Activated CD8-positive, alpha-beta T cell treated with anti-CD3 and anti-CD28 coated beads, Interleukin-2, amount 10 ng/mL, durations not matched to agents 7 days and 5 days (primary cell): ENCODE measurements at regions of chr1 and their contacts with region 1.

Region 1: DNA sequence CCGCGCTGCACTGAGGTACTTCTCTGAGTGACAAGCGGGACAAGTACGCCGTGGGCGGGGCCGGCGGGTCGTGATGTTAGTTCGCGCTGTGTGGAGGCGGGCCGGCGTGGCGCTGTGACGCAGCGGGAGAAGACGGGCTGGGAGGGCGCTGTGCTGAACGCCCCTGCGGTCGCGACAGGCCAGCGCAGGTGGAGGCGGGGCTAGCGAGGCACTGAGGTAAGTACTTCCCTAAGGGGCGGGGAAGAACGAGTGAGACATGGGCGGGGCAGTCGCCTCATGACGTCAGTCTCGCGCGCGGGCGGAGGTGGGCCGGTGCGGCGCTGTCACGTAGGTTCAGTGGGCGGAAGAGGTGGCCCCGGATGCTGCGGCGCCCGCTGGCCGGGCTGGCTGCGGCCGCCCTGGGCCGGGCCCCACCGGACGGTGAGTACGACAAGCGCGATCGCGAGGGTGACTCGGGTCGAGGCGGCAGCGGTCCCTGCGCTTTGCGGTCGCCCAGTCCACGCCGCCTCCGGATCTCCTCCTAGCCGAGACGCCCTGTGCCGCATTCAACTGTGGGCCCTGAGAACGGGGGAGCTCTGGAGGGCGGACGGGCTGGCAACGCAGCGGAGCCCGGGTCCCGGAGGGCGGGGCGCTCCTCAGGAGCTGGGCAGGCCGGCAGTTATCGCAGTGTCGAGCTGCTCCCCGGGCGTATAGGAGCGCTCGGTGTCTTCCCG is at the start of gene GUK1:
- DNase-seq: peak; percentile 100
- ATAC-seq: peak; percentile 91
- H3K4me3 Mint-ChIP-seq: peak within 1 kb of the TSS; percentile 100
- H3K27ac Mint-ChIP-seq: peak within 1 kb of the TSS; percentile 99
- H3K4me1 Mint-ChIP-seq: peaks cover 42% of the 10 kb centered on the region
- H3K27me3 Mint-ChIP-seq: peaks cover 8% of the 10 kb centered on the region
- total RNA-seq, gene GUK1: 339 to 344 TPM

Region 2: GRCh38 chr1:228097328-228098081 is 42.6 kb before region 1 on chr1:
- CTCF ChIA-PET with region 1: no interaction called
- POLR2A ChIA-PET with region 1: no interaction called
- DNase-seq: no peak
- ATAC-seq: no peak
- H3K4me3 Mint-ChIP-seq: no peak overlapping the region
- H3K27ac Mint-ChIP-seq: no peak overlapping the region
- H3K4me1 Mint-ChIP-seq: peaks cover 13% of the 10 kb centered on the region
- H3K27me3 Mint-ChIP-seq: no peaks in the 10 kb centered on the region

Region 3: DNA sequence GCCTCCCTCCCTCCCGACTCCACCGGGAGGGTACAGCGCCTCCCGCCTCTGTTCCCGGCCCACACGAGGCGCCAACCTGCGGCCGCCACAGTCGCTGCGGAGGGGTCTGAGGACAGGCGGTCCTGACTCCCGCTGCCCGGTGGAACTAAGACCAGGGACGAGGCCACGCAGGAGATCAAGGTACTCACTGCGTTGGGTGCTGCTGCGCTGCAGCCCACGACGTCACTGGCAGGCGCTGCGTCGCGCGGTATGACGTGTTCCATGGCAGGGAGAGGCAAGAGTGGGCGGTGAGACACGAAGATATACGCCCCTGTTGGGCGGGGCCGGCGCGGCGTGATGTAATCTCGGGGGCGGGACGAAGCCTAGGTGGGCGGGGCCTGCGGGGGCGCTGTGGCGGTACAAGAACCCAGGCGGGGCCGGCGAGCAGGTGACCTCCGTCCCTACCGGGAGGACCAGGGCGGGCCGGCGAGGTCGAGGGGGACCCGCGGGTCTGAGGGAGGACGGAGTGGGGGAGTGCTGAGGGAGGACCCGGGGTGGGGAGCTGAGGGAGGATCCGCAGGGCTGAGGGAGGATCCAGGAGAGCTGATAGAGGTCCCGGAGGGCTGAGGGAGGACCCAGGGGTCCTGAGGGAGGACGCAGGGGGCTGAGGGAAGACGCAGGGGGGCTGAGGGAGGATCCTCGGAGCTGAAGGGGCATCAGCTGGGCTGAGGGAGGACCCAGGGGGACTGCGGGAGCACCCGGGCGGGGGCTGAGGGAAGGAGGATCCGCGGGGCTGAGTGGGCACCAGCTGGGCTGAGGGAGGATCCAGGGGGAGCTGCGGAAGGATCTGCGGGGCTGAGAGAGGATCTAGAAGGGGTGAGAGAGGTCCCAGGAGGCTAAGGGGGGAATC is 30.8 kb before region 1 on chr1 and contains the start of gene MRPL55:
- CTCF ChIA-PET with region 1: interaction called, 3 read pairs
- POLR2A ChIA-PET with region 1: interaction called, 12 read pairs
- DNase-seq: peak; percentile 98
- ATAC-seq: peak; percentile 95
- H3K4me3 Mint-ChIP-seq: peak within 1 kb of the TSS; percentile 92
- H3K27ac Mint-ChIP-seq: peak within 1 kb of the TSS; percentile 96
- H3K4me1 Mint-ChIP-seq: peaks cover 41% of the 10 kb centered on the region
- H3K27me3 Mint-ChIP-seq: no peaks in the 10 kb centered on the region
- total RNA-seq, gene MRPL55: 51.1 to 60.7 TPM

Region 4: DNA sequence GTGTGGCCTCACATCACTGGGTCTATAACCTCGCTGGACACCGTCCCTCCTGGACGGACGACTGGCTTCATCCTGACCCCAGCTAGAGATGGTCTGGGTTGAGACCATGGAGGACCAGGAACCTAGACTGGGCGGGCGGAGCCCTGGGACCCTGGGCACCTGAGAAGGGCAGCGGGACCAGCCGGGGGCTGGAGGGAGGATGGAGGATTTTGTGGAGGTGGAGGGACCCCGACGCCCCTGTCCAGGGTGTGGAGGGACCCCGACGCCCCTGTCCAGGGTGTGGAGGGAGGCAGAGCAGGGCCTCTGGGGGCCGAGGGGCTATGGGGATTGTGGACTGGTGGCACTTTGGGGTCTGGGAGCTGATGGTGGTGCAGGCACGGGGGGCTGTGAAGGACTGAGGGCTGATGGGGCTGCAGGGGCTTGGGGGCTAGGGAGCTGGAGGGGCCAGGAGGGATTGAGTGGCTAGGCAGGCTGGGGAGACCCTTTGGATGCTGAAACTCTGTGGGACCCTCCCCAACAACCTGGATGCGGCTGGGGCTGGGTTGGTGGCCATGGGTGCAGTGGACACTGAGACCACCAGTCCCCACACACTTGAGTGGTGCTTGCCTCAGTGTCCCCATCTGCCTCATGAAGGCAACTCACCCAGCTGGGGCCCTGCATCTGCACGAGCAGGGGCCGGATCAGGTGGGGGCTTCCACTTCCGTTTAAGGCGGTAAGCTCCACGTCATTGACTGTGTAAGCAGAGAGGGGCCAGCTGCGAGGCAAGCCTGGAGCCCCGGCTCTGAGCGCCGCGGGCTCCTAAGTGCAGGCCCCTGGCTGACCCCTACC is 17.0 kb after region 1 on chr1:
- CTCF ChIA-PET with region 1: interaction called, 7 read pairs
- POLR2A ChIA-PET with region 1: interaction called, 38 read pairs
- DNase-seq: peak; percentile 70
- ATAC-seq: peak; percentile 62
- H3K4me3 Mint-ChIP-seq: peak overlapping the region; percentile 69
- H3K27ac Mint-ChIP-seq: peak overlapping the region; percentile 91
- H3K4me1 Mint-ChIP-seq: peaks cover 46% of the 10 kb centered on the region
- H3K27me3 Mint-ChIP-seq: no peaks in the 10 kb centered on the region